Right ventricle myocardium superior (tissue), 1 donor: ENCODE measurements at regions of chr9 and their contacts with region 1.

Region 1: GRCh38 chr9:72271613-72272478 is 93.2 kb downstream of the ZFAND5 start:
- DNase-seq: no peak
- ATAC-seq: peak; percentile 77

Region 2: DNA sequence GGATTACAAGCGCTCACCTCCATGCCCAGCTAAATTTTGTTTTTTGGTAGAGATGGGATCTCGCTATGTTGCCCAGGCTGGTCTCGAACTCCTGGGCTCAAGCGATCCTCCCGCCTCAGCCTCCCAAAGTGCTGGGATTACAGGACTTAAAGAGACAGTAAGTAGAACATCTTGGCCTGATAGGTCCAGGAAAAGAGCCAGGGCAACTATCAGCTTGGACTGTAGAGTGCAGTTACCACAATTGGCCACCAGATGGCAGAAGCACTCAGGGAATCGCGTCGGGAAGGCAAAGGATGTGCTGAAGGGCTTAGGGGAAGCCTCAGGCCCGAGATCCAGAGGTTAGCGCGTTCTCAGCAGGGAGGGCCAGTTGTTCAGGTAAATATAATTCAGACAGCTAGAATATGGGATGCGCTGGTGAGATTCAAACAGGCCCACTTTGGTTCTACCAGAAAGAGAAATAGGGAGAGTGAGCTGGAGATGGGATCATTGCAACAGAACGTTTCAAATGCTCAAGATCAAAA is 232.9 kb before region 1 on chr9:
- intact Hi-C with region 1: loop called (anchors 1 kb)
- DNase-seq: peak; percentile 75
- ATAC-seq: peak; percentile 89

Region 3: DNA sequence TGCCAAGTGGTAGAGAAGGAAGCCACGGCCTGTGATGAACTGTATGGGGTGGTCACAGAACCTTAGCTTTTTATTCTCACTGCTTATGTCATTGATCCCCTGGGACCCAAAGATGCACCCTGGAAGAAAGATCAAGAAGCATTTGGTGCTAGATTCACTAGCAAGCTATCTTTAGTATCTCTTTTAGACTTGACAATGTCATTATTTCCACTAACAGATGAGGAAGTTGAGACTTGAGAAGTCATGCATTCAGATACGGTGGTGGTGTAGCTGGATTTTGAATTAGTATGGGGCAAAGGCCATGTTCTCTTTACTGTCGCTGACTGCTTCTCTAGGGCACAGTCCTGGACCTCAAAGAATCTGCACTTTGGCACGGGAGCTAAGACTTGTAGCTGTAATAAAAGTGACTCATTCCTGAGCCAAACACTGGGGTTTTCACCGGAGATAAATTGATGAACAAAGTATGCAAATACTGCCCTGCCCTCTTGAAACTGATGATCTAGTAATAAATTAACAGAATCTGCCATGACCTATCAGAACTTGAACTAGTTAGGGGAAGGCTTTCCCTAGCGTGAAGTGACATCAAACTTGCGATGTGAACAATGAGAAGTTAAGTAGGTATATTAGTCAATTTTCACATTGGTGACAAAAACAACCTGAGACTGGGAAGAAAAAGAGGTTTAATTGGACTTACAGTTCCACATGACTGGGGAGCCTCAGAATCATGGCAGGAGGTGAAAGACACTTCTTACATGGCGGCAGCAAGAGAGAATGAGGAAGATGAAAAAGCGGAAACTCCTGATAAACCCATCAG is 117.2 kb before region 1 on chr9:
- intact Hi-C with region 1: no loop called
- DNase-seq: no peak
- ATAC-seq: no peak